K562 (cell line): ENCODE measurements at regions of chr3 and their contacts with region 1.

Region 1: GRCh38 chr3:73100741-73101559 is 39.5 kb downstream of the EBLN2 start:
- DNase-seq: peak; percentile 78 to 82 (median 81)
- ATAC-seq: peak; percentile 98
- H3K4me3 ChIP-seq: no peak overlapping the region
- H3K27ac ChIP-seq: no peak overlapping the region
- H3K4me1 ChIP-seq: no peaks in the 10 kb centered on the region; a peak in 1 of 5 replicates
- H3K27me3 ChIP-seq: peaks cover 2 to 27% of the 10 kb centered on the region in 2 experiments; a peak in 2 of 5 replicates
- CTCF ChIP-seq: peak; percentile 79 to 86 (median 86)
- EP300 ChIP-seq: no peak
- POLR2A ChIP-seq: no peak
- RAD21 ChIP-seq: peak; percentile 81 to 90

Region 2: GRCh38 chr3:73115806-73116205 is 14.9 kb after region 1 on chr3:
- CTCF ChIA-PET with region 1: no interaction called
- POLR2A ChIA-PET with region 1: no interaction called
- in situ Hi-C with region 1: no loop called
- intact Hi-C with region 1: no loop called
- DNase-seq: no peak
- ATAC-seq: no peak
- H3K4me3 ChIP-seq: no peak overlapping the region
- H3K27ac ChIP-seq: no peak overlapping the region
- H3K4me1 ChIP-seq: no peaks in the 10 kb centered on the region
- H3K27me3 ChIP-seq: peaks cover 0 to 10% of the 10 kb centered on the region in 2 experiments; a peak in 2 of 5 replicates
- CTCF ChIP-seq: no peak
- EP300 ChIP-seq: no peak
- POLR2A ChIP-seq: no peak
- RAD21 ChIP-seq: no peak

Region 3: DNA sequence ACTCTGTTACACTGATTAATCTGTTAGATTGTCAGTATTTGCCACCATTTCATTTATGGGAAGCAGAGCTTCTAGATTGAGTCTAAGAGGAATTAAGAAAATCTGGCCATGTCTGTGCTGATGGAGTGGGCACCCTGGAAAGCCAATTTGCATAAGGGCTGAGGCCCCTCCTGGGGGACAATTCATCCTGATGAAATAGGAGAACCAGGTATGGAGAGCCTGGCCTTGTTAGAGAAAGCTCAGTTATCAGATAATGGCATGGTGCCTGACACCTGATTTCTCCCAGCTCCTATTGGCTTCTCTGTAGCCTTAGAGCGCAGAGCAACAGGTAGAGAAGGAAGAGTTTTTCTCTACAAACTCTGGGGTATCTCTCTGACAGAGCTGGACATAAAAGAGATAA is 74.7 kb after region 1 on chr3:
- CTCF ChIA-PET with region 1: no interaction called
- POLR2A ChIA-PET with region 1: no interaction called
- in situ Hi-C with region 1: no loop called
- intact Hi-C with region 1: loop called (anchors 10 kb)
- DNase-seq: no peak
- ATAC-seq: no peak
- H3K4me3 ChIP-seq: no peak overlapping the region
- H3K27ac ChIP-seq: no peak overlapping the region
- H3K4me1 ChIP-seq: no peaks in the 10 kb centered on the region
- H3K27me3 ChIP-seq: peaks cover 5 to 15% of the 10 kb centered on the region in 2 experiments; a peak in 3 of 5 replicates
- CTCF ChIP-seq: no peak
- EP300 ChIP-seq: no peak
- POLR2A ChIP-seq: no peak
- RAD21 ChIP-seq: no peak

Region 4: GRCh38 chr3:73215281-73215680 is 114.3 kb after region 1 on chr3:
- CTCF ChIA-PET with region 1: no interaction called
- POLR2A ChIA-PET with region 1: no interaction called
- in situ Hi-C with region 1: no loop called
- intact Hi-C with region 1: loop called (anchors 10 kb)
- DNase-seq: no peak
- ATAC-seq: no peak
- H3K4me3 ChIP-seq: no peak overlapping the region
- H3K27ac ChIP-seq: no peak overlapping the region
- H3K4me1 ChIP-seq: no peaks in the 10 kb centered on the region
- H3K27me3 ChIP-seq: peaks cover 0 to 10% of the 10 kb centered on the region in 2 experiments; a peak in 1 of 5 replicates
- CTCF ChIP-seq: no peak
- EP300 ChIP-seq: no peak
- POLR2A ChIP-seq: no peak
- RAD21 ChIP-seq: no peak

Region 5: DNA sequence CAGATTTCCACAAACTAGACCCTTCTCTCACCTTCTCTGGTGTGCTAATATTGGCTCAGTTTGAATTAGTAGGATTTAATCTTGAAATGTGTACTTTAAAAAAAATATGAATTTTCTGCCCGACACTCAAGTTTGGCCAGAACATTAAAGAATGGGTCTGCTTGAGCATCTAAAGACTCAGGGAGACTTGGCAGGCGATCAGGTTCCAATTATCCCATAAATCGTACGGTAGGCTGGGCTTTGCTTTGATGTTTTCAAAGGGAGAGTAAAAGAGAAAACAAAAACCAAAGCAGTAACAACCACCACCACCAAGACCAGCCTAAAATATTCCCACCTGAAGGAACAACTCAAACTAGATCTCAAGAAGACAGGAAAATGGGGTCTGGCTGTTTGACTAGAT is 191.3 kb after region 1 on chr3:
- CTCF ChIA-PET with region 1: no interaction called
- POLR2A ChIA-PET with region 1: interaction called, 3 read pairs
- in situ Hi-C with region 1: no loop called
- intact Hi-C with region 1: loop called (anchors 10 kb)
- DNase-seq: no peak
- ATAC-seq: no peak
- H3K4me3 ChIP-seq: no peak overlapping the region
- H3K27ac ChIP-seq: no peak overlapping the region
- H3K4me1 ChIP-seq: no peaks in the 10 kb centered on the region
- H3K27me3 ChIP-seq: peaks cover 0 to 8% of the 10 kb centered on the region in 2 experiments; a peak in 3 of 5 replicates
- CTCF ChIP-seq: no peak
- EP300 ChIP-seq: no peak
- POLR2A ChIP-seq: no peak
- RAD21 ChIP-seq: no peak

Region 6: DNA sequence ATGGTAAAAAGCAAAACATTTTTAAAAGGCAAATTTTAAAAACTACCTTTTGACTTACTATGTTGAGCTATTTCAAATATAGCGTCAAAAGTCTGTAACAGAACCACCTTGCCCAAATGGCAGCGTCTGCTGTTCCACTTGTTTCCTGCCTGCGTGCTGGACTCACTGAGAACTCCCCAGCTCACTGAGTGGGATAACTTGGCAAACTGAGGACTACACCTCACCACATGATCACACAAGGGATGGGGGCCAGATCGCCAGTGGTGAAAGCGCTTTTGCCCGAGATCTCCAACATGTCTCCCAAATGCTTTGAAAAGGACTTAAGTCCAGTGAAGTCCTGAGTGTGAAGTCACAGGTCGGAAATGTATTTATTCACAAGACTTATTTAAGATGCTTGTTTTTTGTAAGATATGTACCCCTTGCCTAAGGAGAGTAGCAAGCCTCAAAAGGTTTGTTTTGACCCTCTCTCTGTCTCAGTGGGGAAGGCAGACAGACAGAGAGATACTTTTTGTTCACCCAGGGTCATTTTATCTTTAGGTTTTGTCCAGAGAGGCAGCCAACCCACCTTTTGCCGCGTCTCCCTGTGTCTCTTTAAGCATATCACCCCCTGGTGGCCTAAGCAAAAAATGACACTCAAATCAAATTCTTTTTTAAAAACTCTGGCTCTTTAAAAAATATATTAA is 331.2 kb after region 1 on chr3:
- CTCF ChIA-PET with region 1: interaction called, 19 read pairs
- POLR2A ChIA-PET with region 1: no interaction called
- in situ Hi-C with region 1: loop called (anchors 5 kb)
- intact Hi-C with region 1: loop called (anchors 1 kb)
- DNase-seq: peak; percentile 37 to 48 (median 44)
- ATAC-seq: 0 out of 3 replicates have a peak, but pooled peaks have one; percentile 42
- H3K4me3 ChIP-seq: no peak overlapping the region
- H3K27ac ChIP-seq: no peak overlapping the region
- H3K4me1 ChIP-seq: no peaks in the 10 kb centered on the region
- H3K27me3 ChIP-seq: no peaks in the 10 kb centered on the region
- CTCF ChIP-seq: peak; percentile 53 to 64 (median 56)
- EP300 ChIP-seq: no peak
- POLR2A ChIP-seq: no peak
- RAD21 ChIP-seq: peak; percentile 45 to 59; a peak in 3 of 4 replicates

Region 7: GRCh38 chr3:73502609-73503583 is 401.9 kb after region 1 on chr3:
- CTCF ChIA-PET with region 1: interaction called, 13 read pairs
- POLR2A ChIA-PET with region 1: no interaction called
- in situ Hi-C with region 1: loop called (anchors 10 kb)
- intact Hi-C with region 1: loop called (anchors 2 kb)
- DNase-seq: peak; percentile 44 to 61 (median 55)
- ATAC-seq: peak; percentile 71; the same call in 1 of the 3 replicates
- H3K4me3 ChIP-seq: no peak overlapping the region
- H3K27ac ChIP-seq: no peak overlapping the region
- H3K4me1 ChIP-seq: no peaks in the 10 kb centered on the region
- H3K27me3 ChIP-seq: peaks cover 0 to 4% of the 10 kb centered on the region in 2 experiments; a peak in 1 of 5 replicates
- CTCF ChIP-seq: peak; percentile 57 to 72 (median 69)
- EP300 ChIP-seq: no peak
- POLR2A ChIP-seq: no peak
- RAD21 ChIP-seq: peak; percentile 55 to 73